ENCODE measurements at regions of chr17 and their contacts with region 1.

Region 1: DNA sequence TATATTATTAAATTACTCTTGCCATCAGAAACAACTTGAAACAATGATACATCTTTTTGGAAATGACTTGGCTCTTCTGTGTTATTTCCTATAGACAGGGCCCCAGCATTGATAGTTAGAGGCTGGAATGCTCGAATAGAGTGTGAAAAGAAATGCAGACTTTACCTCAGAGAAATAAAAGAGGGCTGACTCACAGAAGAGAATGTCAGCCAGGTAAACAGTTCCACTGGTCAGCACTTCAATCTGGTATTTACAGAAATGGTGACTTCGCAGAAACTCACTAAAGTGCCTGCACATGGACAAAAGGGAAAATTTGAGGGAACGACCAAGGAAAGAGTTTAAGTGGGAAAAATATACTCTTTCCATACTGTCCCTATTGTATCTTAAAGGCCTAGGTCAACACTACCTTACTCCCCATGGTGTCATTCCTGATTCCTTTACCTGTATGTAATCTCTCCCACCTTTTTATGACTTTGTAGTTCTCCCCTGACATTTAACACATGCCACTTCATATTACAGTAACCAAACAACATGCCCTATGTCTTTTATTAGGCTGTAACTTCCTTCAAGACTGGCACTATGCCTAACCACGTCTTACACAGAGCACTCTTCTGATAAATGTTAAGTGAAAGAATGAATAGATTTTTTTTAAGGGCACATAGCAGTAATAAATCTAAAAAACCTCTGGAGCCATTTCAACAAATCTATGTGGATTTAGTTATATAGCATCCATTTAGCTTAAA is 36.7 kb downstream of the AKAP10 start:
- ATAC-seq: peak in 1 of 8 experiments; percentile 69
- H3K4me3 ChIP-seq: no peak overlapping the region
- H3K27ac ChIP-seq: no peak overlapping the region
- H3K4me1 ChIP-seq: no peaks in the 10 kb centered on the region

Region 2: DNA sequence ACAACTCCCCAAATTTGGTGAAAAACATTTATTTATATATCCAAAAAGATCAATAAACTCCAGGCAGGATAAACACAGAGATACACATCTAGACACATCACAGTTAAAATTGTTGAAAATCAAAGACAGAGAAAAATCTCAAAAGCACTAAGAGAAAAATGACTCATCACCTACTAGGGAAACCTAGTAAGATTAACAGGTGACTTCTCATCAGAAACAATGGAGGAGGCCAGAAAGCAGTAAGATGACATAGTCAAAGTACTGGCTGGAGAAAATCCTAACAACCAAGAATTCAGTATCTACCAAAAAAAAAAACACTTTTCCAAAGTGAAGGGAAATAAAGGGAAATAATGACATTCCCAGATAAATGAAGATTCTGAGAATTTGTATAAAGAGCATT is 107.0 kb before region 1 on chr17:
- in situ Hi-C with region 1: loop called in 1 of 9 experiments (anchors 25 kb)
- ATAC-seq: no peak
- H3K4me3 ChIP-seq: no peak overlapping the region
- H3K27ac ChIP-seq: no peak overlapping the region
- H3K4me1 ChIP-seq: no peaks in the 10 kb centered on the region

Measured in motor neuron (in vitro differentiated cells).